ENCODE measurements at regions of chr5 and their contacts with region 1.

Region 1: GRCh38 chr5:139517683-139518564 is 35.4 kb upstream of the STING1 start:
- DNase-seq: peak; percentile 92
- ATAC-seq: peak; percentile 96
- H3K4me3 ChIP-seq: peak overlapping the region; percentile 41 to 68 (median 61)
- H3K4me3 Mint-ChIP-seq: peak overlapping the region; percentile 87
- H3K27ac ChIP-seq: peak overlapping the region; percentile 71 to 79
- H3K27ac Mint-ChIP-seq: peak overlapping the region; percentile 86
- H3K4me1 ChIP-seq: peaks cover 2 to 20% of the 10 kb centered on the region in 2 donors
- H3K4me1 Mint-ChIP-seq: peaks cover 23% of the 10 kb centered on the region
- H3K27me3 ChIP-seq: no peaks in the 10 kb centered on the region
- H3K27me3 Mint-ChIP-seq: no peaks in the 10 kb centered on the region
- CTCF ChIP-seq: peak; percentile 92

Region 2: GRCh38 chr5:138809391-138809790 is 708.5 kb before region 1 on chr5:
- CTCF ChIA-PET with region 1: no interaction called
- POLR2A ChIA-PET with region 1: no interaction called
- intact Hi-C with region 1: no loop called
- DNase-seq: no peak
- ATAC-seq: no peak
- H3K4me3 ChIP-seq: no peak overlapping the region
- H3K4me3 Mint-ChIP-seq: no peak overlapping the region
- H3K27ac ChIP-seq: no peak overlapping the region
- H3K27ac Mint-ChIP-seq: no peak overlapping the region
- H3K4me1 ChIP-seq: peaks cover 0 to 4% of the 10 kb centered on the region in 2 donors
- H3K4me1 Mint-ChIP-seq: peaks cover 9% of the 10 kb centered on the region
- H3K27me3 ChIP-seq: no peaks in the 10 kb centered on the region
- H3K27me3 Mint-ChIP-seq: no peaks in the 10 kb centered on the region
- CTCF ChIP-seq: no peak

Region 3: GRCh38 chr5:139251281-139251687 is 266.6 kb before region 1 on chr5:
- CTCF ChIA-PET with region 1: interaction called, 7 read pairs
- POLR2A ChIA-PET with region 1: no interaction called
- intact Hi-C with region 1: loop called (anchors 1 kb)
- DNase-seq: peak; percentile 63
- ATAC-seq: peak; percentile 41
- H3K4me3 ChIP-seq: no peak overlapping the region
- H3K4me3 Mint-ChIP-seq: no peak overlapping the region
- H3K27ac ChIP-seq: no peak overlapping the region
- H3K27ac Mint-ChIP-seq: no peak overlapping the region
- H3K4me1 ChIP-seq: no peaks in the 10 kb centered on the region
- H3K4me1 Mint-ChIP-seq: peaks cover 2% of the 10 kb centered on the region
- H3K27me3 ChIP-seq: no peaks in the 10 kb centered on the region
- H3K27me3 Mint-ChIP-seq: peaks cover 3% of the 10 kb centered on the region
- CTCF ChIP-seq: peak; percentile 59

Region 4: DNA sequence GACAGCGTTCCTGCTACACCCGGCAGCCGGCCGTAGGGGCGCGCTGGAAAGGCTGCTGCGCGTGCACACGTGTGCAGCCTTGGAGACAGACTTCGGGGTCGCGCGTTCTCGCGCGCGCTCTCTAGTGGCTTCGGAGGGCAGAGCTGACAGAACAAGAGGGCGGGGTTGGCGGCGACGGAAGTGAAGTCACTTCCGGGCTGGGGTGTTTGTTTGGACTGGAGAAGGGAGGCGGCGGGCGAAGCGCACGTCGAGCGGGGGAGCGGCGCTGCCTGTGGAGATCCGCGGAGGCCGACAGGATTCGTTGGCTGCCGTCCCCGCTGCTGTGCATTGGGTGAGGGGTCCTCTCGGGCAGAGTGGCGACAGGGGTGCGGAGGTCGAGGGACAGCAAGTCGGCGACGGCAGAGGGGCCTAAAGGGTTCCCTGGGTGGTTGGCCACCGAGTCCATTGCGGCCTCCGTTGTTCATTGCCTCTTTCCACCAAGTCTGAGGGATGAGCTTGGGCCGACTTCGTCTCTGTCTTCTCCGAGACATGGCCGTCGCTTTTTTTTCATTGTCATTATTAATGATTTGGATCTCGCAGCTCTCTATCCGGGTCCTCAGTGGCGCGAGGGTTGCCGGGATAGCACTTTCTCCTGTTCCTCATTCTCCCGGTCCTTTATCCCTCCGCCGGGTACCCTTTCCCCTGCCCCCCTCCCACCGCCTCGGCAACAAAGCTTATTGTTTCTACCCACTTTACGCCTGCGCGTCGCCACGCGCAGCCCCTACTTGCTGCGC is 176.1 kb before region 1 on chr5 and contains the start of gene PAIP2:
- CTCF ChIA-PET with region 1: no interaction called
- POLR2A ChIA-PET with region 1: no interaction called
- intact Hi-C with region 1: loop called (anchors 10 kb)
- DNase-seq: peak; percentile 98
- ATAC-seq: peak; percentile 89
- H3K4me3 ChIP-seq: peak within 1 kb of the TSS; percentile 63 to 99 (median 98)
- H3K4me3 Mint-ChIP-seq: peak within 1 kb of the TSS; percentile 100
- H3K27ac ChIP-seq: peak within 1 kb of the TSS; percentile 91 to 96
- H3K27ac Mint-ChIP-seq: peak within 1 kb of the TSS; percentile 100
- H3K4me1 ChIP-seq: peaks cover 29 to 31% of the 10 kb centered on the region in 2 donors
- H3K4me1 Mint-ChIP-seq: peaks cover 48% of the 10 kb centered on the region
- H3K27me3 ChIP-seq: no peaks in the 10 kb centered on the region
- H3K27me3 Mint-ChIP-seq: no peaks in the 10 kb centered on the region
- CTCF ChIP-seq: peak; percentile 72
- total RNA-seq, gene PAIP2: 109 and 121 TPM in 2 replicates

Region 5: DNA sequence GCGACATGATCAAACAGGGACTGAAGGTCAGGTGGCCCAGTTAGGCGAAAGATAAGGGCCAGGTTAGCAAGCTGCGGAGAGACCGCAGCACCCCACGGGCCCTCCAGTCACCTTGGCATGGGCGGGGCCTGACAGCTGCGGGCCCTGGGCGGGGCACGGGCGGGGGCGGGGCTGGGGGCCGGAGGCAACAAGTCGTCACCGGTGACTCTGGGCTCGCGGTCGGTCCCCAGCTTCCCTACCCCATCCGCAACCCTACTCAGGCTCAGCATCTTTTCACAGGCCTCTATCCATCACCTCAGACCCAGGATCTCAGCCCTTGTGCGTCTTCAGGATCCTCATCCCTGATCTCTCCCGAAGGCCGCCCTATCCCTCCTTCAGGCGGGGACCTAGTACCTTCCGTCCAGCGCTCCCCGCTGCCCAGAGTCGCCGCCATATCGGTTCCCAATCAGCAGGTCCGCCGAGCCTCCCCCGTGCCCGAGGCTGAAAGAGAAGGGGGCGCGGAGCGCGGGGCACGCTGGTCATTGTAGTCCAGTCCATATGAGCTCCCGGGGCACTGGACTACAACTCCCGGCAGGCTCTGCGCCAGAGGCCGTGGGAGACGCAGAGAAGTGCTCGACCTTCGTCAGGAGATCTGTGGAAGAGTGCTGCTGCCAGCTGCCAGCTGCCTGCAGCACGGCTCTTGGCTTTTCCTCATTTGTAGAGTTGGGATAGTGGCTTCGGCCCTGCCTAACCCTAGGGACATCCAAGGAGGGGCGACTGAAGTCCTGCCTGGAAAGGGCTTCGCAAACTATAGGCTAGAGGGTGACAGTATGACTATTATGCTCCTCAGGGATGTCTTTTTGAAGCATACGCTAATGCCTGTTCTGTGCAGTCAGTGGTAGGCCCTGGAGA is 78.7 kb before region 1 on chr5 and contains the start of gene DNAJC18:
- CTCF ChIA-PET with region 1: interaction called, 3 read pairs
- POLR2A ChIA-PET with region 1: no interaction called
- intact Hi-C with region 1: loop called (anchors 5 kb)
- DNase-seq: peak; percentile 93
- ATAC-seq: peak; percentile 94
- H3K4me3 ChIP-seq: peak within 1 kb of the TSS; percentile 53 to 97 (median 91)
- H3K4me3 Mint-ChIP-seq: peak within 1 kb of the TSS; percentile 97
- H3K27ac ChIP-seq: peak within 1 kb of the TSS; percentile 98 to 100
- H3K27ac Mint-ChIP-seq: peak within 1 kb of the TSS; percentile 99
- H3K4me1 ChIP-seq: peaks cover 11 to 12% of the 10 kb centered on the region in 2 donors
- H3K4me1 Mint-ChIP-seq: peaks cover 16% of the 10 kb centered on the region
- H3K27me3 ChIP-seq: no peaks in the 10 kb centered on the region
- H3K27me3 Mint-ChIP-seq: peaks cover 3% of the 10 kb centered on the region
- CTCF ChIP-seq: no peak
- total RNA-seq, gene DNAJC18: 13.6 and 16.5 TPM in 2 replicates

Region 6: GRCh38 chr5:139574641-139575312 is 56.9 kb after region 1 on chr5:
- CTCF ChIA-PET with region 1: interaction called, 7 read pairs
- POLR2A ChIA-PET with region 1: interaction called, 4 read pairs
- intact Hi-C with region 1: loop called (anchors 1 kb)
- DNase-seq: peak; percentile 63
- ATAC-seq: peak; percentile 67
- H3K4me3 ChIP-seq: no peak overlapping the region
- H3K4me3 Mint-ChIP-seq: peak overlapping the region; percentile 2
- H3K27ac ChIP-seq: peak overlapping the region in 1 of 2 donors; percentile 66
- H3K27ac Mint-ChIP-seq: peak overlapping the region; percentile 5
- H3K4me1 ChIP-seq: peaks cover 71 to 76% of the 10 kb centered on the region in 2 donors
- H3K4me1 Mint-ChIP-seq: peaks cover 74% of the 10 kb centered on the region
- H3K27me3 ChIP-seq: no peaks in the 10 kb centered on the region
- H3K27me3 Mint-ChIP-seq: no peaks in the 10 kb centered on the region
- CTCF ChIP-seq: peak; percentile 79

Measured in B cell (primary cell).